CD8-positive, alpha-beta T cell (primary cell): ENCODE measurements at regions of chr18 and their contacts with region 1.

Region 1: DNA sequence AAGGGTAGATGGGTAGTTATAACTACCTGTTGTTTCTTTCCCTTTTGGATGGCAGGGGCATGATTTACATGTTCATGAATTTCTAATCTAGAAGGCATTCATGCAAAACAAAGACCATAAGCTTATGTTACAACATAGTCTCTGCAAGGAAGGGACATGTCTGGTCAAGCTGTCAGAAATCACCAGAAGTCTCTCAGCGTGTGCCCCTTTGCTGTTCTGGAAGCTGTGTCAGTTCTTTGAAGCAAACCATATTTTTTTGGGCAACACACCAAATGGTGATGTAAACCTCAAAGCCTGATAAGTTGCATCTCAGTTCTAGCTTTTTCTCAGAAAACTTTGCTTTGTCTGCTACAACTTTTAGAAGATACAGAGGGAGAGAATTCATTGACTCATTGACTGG is 173.5 kb upstream of the CTAGE1 start:
- DNase-seq: no peak
- ATAC-seq: no peak
- H3K4me3 ChIP-seq: no peak overlapping the region
- H3K4me3 Mint-ChIP-seq: no peak overlapping the region
- H3K27ac ChIP-seq: no peak overlapping the region
- H3K27ac Mint-ChIP-seq: no peak overlapping the region
- H3K4me1 ChIP-seq: no peaks in the 10 kb centered on the region
- H3K4me1 Mint-ChIP-seq: no peaks in the 10 kb centered on the region
- H3K27me3 ChIP-seq: no peaks in the 10 kb centered on the region
- H3K27me3 Mint-ChIP-seq: peaks cover 4% of the 10 kb centered on the region
- CTCF ChIP-seq: no peak

Region 2: DNA sequence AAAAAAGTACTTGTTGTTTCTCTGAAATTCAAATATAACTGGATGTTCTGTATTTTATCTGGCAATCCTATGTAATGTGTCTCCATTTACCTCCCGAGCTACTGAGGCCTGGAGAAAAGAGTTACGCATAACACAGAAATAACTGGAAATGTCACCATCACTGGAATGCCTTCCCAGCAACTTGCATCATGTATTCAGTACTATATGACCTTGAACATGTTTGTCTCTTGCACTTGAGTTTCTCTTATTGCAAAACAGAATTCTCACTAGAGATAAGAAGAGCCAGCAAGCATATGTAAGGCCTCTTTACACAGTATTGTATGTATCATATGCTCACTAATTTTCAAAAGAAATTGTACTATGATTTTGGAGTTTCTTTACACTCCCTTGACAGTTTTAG is 73.9 kb before region 1 on chr18:
- CTCF ChIA-PET with region 1: no interaction called
- POLR2A ChIA-PET with region 1: no interaction called
- intact Hi-C with region 1: loop called in 1 of 2 experiments (anchors 10 kb)
- DNase-seq: no peak
- ATAC-seq: no peak
- H3K4me3 ChIP-seq: no peak overlapping the region
- H3K4me3 Mint-ChIP-seq: no peak overlapping the region
- H3K27ac ChIP-seq: no peak overlapping the region
- H3K27ac Mint-ChIP-seq: no peak overlapping the region
- H3K4me1 ChIP-seq: no peaks in the 10 kb centered on the region
- H3K4me1 Mint-ChIP-seq: no peaks in the 10 kb centered on the region
- H3K27me3 ChIP-seq: no peaks in the 10 kb centered on the region
- H3K27me3 Mint-ChIP-seq: peaks cover 9% of the 10 kb centered on the region
- CTCF ChIP-seq: no peak

Region 3: GRCh38 chr18:22713511-22713910 is 122.3 kb after region 1 on chr18:
- CTCF ChIA-PET with region 1: no interaction called
- POLR2A ChIA-PET with region 1: no interaction called
- intact Hi-C with region 1: no loop called
- DNase-seq: no peak
- ATAC-seq: no peak
- H3K4me3 ChIP-seq: no peak overlapping the region
- H3K4me3 Mint-ChIP-seq: no peak overlapping the region
- H3K27ac ChIP-seq: no peak overlapping the region
- H3K27ac Mint-ChIP-seq: no peak overlapping the region
- H3K4me1 ChIP-seq: no peaks in the 10 kb centered on the region
- H3K4me1 Mint-ChIP-seq: no peaks in the 10 kb centered on the region
- H3K27me3 ChIP-seq: no peaks in the 10 kb centered on the region
- H3K27me3 Mint-ChIP-seq: peaks cover 6% of the 10 kb centered on the region
- CTCF ChIP-seq: no peak